CD4-positive, alpha-beta memory T cell (primary cell): ENCODE measurements at regions of chr11 and their contacts with region 1.

Region 1: GRCh38 chr11:64864473-64865285 is 13.7 kb downstream of the EHD1 start:
- DNase-seq: peak in 2 of 5 donors; percentile 24 to 64
- H3K4me3 ChIP-seq: peak overlapping the region; percentile 40 to 59
- H3K4me3 Mint-ChIP-seq: peak overlapping the region; percentile 64 to 91 (median 82)
- H3K27ac ChIP-seq: peak overlapping the region; percentile 68
- H3K27ac Mint-ChIP-seq: peak overlapping the region; percentile 76 to 99 (median 95)
- H3K4me1 ChIP-seq: peaks cover 99% of the 10 kb centered on the region
- H3K4me1 Mint-ChIP-seq: peaks cover 53 to 95% (median 78%) of the 10 kb centered on the region in 4 donors
- H3K27me3 ChIP-seq: no peaks in the 10 kb centered on the region
- H3K27me3 Mint-ChIP-seq: no peaks in the 10 kb centered on the region

Region 2: DNA sequence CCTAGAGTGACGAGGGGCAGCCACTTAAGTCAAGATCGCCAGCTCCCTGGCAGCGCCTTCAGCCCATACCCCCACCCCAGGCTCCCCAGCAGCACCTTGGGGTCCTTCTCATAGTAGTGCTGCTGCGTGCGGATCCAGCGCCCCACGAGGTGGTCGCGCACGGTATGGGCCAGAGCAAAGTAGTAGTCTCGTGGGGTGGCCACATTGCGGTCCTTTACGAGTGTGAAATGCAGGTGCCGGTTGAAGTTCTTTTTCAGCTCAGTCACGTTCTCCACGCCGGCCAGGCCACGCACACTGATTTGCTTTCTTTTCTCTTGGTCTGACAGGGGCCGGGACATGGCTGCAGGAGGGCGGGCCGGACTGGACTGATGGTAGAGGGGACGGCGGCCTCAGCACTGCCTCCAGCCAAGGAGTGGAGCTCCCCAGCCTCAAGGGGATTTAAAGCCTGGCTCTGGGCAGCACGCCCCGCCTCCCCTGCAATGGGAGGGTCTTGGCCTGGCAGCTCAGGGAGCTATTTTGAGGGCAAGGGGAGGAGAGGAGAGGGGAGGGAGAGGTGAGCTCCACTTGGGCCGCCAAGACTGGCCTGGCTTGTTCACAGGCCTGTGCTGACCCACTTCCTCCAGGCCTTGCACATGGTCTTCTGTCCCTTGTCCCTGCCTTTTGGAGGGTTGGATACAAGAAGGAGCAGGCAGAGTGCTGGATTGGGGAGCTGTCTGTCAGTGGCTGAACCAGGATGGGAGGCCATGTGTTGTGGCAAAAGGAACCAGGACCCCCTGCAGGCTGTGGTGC is 104.9 kb before region 1 on chr11 and contains the start of gene PYGM:
- CTCF ChIA-PET with region 1: interaction called, 3 read pairs
- POLR2A ChIA-PET with region 1: interaction called, 10 read pairs
- intact Hi-C with region 1: no loop called
- DNase-seq: peak in 1 of 5 donors; percentile 44
- H3K4me3 ChIP-seq: no peak within 1 kb of the TSS
- H3K4me3 Mint-ChIP-seq: peak within 1 kb of the TSS in 7 of 8 donors; percentile 7 to 78 (median 72)
- H3K27ac ChIP-seq: peak within 1 kb of the TSS; percentile 10
- H3K27ac Mint-ChIP-seq: peak within 1 kb of the TSS; percentile 72 to 94 (median 86)
- H3K4me1 ChIP-seq: peaks cover 55% of the 10 kb centered on the region
- H3K4me1 Mint-ChIP-seq: peaks cover 38 to 66% (median 51%) of the 10 kb centered on the region in 4 donors
- H3K27me3 ChIP-seq: no peaks in the 10 kb centered on the region
- H3K27me3 Mint-ChIP-seq: no peaks in the 10 kb centered on the region
- total RNA-seq, gene PYGM: 10.7 to 11.3 TPM